Gastrocnemius medialis (tissue), 4 donors: ENCODE measurements at regions of chr4 and their contacts with region 1.

Region 1: DNA sequence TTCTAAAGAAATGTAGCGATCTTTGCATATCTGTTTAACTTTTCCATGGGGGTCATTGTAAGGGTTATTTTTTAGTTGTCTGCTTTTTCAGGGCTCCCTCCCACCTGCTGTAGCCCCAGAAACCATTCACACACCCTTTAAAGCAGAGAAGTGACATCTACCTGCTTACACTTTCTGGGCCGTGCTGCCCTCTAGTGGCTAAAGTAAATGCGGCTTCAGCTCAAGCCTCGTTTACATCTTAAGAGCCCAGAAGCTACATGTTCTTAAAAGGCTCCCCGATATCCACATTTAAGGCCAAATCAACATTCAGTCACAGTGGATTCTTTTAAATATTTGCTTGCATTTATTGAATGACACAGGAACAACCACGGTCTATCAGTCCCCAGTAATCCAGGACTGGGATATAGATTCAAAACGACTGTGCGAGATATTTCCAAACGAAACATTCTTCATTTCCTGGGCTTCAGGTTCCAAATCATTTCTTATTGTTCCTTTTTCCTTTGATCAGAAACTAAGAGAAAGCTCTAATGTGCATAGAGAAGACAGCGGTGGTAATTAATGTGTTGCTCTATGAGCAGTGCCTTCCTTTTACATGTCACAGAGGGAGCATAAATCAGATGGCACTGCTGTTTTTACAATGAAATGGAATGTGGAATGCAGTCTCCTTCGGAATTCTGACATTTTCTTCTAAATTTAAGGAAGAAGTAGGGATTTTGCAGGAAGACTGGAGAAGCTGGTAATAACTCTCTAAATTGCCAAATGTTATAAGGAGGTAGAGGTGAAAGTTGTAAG is 119.9 kb downstream of the RASGEF1B start:
- DNase-seq: peak; percentile 16 to 37
- ATAC-seq: no peak
- H3K4me3 ChIP-seq: no peak overlapping the region
- H3K27ac ChIP-seq: no peak overlapping the region
- H3K4me1 ChIP-seq: no peaks in the 10 kb centered on the region
- H3K27me3 ChIP-seq: no peaks in the 10 kb centered on the region
- CTCF ChIP-seq: peak; percentile 14 to 81 (median 49)
- POLR2A ChIP-seq: no peak

Region 2: DNA sequence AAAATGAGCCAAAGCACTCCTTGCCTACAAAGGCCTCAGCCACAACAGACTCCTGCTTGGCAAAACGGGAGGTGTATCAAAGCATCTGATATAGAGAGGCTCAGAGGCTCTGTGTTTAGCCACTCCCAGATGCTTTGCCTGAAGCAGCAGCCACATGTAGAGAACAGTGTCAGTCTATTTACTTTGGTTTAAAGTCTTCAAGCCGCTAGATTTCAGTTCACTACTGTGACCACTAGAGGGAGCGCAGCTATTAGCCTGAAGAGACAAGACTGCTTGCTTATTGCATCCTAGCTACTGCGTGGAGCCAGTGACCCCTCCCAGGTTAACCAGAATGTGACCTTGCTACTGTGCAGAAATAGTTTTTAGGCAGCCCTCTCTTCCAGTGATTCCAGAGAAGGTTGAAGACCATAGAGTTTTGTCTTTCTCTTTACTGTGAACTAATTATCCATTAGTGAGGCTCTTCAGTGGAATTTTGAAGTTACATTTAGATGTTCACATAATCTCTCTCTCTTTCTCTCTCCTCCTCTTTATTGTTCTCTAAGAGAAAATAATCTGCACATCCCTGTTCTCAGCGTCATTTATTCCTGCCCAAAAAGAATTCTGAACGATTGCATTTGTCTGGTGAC is 282.0 kb before region 1 on chr4:
- in situ Hi-C with region 1: loop called in 1 of 4 experiments (anchors 10 kb)
- intact Hi-C with region 1: loop called (anchors 5 kb)
- DNase-seq: peak; percentile 16 to 28
- ATAC-seq: peak; percentile 45 to 68
- H3K4me3 ChIP-seq: no peak overlapping the region
- H3K27ac ChIP-seq: no peak overlapping the region
- H3K4me1 ChIP-seq: no peaks in the 10 kb centered on the region
- H3K27me3 ChIP-seq: no peaks in the 10 kb centered on the region
- CTCF ChIP-seq: peak; percentile 21 to 78 (median 64)
- POLR2A ChIP-seq: no peak

Region 3: GRCh38 chr4:81221303-81222081 is 130.4 kb before region 1 on chr4:
- in situ Hi-C with region 1: no loop called
- intact Hi-C with region 1: no loop called
- DNase-seq: no peak
- ATAC-seq: no peak
- H3K4me3 ChIP-seq: no peak overlapping the region
- H3K27ac ChIP-seq: no peak overlapping the region
- H3K4me1 ChIP-seq: no peaks in the 10 kb centered on the region
- H3K27me3 ChIP-seq: no peaks in the 10 kb centered on the region
- CTCF ChIP-seq: no peak
- POLR2A ChIP-seq: no peak

Region 4: DNA sequence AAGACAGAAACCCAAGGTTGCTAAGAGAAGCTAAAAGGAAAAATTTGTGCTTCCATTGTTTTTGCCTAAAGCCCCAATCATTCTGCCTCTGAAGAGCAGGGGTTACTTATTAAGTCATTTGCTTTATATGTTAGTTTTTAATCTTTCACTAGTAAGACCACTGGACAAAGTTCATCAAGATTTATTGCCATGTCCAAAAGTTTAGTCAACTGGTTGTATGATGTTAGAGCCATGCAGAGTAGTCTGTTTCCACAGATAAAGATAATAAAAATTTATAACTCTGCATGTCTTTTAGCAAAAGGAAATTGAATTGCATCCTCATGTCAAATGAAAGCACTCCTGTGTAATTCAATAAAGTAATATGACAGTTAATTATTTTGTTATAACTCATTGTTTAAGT is 61.0 kb before region 1 on chr4:
- in situ Hi-C with region 1: no loop called
- intact Hi-C with region 1: no loop called
- DNase-seq: no peak
- ATAC-seq: no peak
- H3K4me3 ChIP-seq: no peak overlapping the region
- H3K27ac ChIP-seq: no peak overlapping the region
- H3K4me1 ChIP-seq: no peaks in the 10 kb centered on the region
- H3K27me3 ChIP-seq: no peaks in the 10 kb centered on the region
- CTCF ChIP-seq: no peak
- POLR2A ChIP-seq: no peak